ENCODE measurements at regions of chr5 and their contacts with region 1.

Region 1: GRCh38 chr5:157820593-157821252 is 38.2 kb downstream of the CLINT1 start:
- DNase-seq: peak; percentile 64
- ATAC-seq: peak; percentile 43; the same call in 2 of the 3 replicates
- H3K4me3 ChIP-seq: no peak overlapping the region
- H3K27ac ChIP-seq: no peak overlapping the region
- H3K4me1 ChIP-seq: peaks cover 37% of the 10 kb centered on the region
- H3K27me3 ChIP-seq: no peaks in the 10 kb centered on the region
- CTCF ChIP-seq: peak; percentile 49
- EP300 ChIP-seq: no peak
- POLR2A ChIP-seq: no peak
- RAD21 ChIP-seq: no peak

Region 2: GRCh38 chr5:157917899-157918809 is 97.4 kb after region 1 on chr5:
- CTCF ChIA-PET with region 1: interaction called, 14 read pairs
- POLR2A ChIA-PET with region 1: no interaction called
- in situ Hi-C with region 1: loop called (anchors 10 kb)
- intact Hi-C with region 1: loop called (anchors 1 kb)
- DNase-seq: peak; percentile 58
- ATAC-seq: peak; percentile 92
- H3K4me3 ChIP-seq: no peak overlapping the region
- H3K27ac ChIP-seq: no peak overlapping the region
- H3K4me1 ChIP-seq: peaks cover 14% of the 10 kb centered on the region; the same call in 1 of the 2 replicates
- H3K27me3 ChIP-seq: no peaks in the 10 kb centered on the region; a peak in 1 of 5 replicates
- CTCF ChIP-seq: peak; percentile 66
- EP300 ChIP-seq: no peak
- POLR2A ChIP-seq: no peak
- RAD21 ChIP-seq: peak; percentile 58

Region 3: DNA sequence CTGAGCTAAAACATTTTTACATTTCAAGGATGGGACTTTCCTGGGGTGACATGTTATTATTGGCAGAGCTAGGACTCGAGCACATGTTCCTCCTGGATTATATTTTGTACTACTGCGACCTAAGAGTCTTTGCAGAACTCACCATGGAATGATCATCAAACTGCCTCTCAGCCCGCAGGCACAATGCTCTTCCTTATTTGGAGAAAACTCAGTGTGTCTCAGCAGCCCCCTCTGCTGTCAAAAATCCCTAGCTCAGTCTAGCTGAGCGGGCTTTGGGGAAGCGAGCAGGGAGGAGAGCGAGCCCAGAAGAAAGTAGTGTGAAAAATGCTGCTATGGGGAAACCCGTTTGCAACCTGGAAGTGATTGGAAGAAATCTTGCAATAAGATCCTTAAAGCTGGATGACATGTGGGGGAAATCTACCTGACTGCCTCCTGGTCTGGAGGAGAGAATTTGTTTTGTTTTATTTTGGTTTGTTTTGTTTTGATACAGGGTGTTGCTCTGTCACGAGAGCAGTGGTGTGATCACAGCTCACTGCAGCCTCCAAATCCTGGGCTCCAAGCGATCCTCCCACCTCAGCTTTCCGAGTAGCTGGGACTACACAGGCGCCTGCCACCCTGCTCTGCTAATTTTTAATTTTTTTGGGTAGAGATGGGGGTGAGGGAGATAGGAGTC is 128.2 kb after region 1 on chr5:
- CTCF ChIA-PET with region 1: interaction called, 21 read pairs
- POLR2A ChIA-PET with region 1: no interaction called
- in situ Hi-C with region 1: no loop called
- intact Hi-C with region 1: loop called (anchors 1 kb)
- DNase-seq: peak; percentile 92
- ATAC-seq: peak; percentile 100
- H3K4me3 ChIP-seq: no peak overlapping the region
- H3K27ac ChIP-seq: no peak overlapping the region
- H3K4me1 ChIP-seq: peaks cover 9% of the 10 kb centered on the region; the same call in 1 of the 2 replicates
- H3K27me3 ChIP-seq: no peaks in the 10 kb centered on the region; a peak in 1 of 5 replicates
- CTCF ChIP-seq: peak; percentile 90
- EP300 ChIP-seq: no peak
- POLR2A ChIP-seq: no peak
- RAD21 ChIP-seq: no peak; the same call in 1 of the 2 replicates

Region 4: DNA sequence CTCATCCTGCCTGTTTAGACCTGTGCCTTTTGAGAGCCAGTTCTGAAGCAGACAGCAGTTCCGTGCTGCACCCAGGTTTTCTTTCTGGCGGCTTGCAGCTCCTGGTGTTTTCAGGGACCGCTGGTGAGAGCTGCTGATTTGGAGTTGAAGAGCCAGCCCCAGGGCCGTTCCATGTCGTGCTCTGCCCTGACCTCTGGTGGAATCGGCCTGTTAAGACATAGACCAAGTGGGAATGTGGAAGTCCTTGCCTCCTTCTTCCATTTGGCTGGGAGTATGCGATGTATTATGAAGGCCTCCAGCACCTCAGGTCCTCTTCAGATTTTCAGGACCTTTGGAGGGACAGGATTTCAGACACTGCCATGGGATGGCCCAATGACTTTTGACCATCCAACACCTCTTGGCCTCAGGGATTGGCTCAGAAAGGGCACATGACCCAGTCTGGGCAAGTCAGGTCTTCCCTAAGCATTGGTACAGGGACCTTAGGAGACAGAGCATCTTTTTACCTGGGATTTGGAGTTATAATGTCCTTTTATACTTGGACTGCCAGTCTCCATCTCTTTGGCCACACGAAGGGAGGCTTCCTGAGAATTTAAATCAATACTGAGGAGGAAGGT is 174.3 kb after region 1 on chr5:
- CTCF ChIA-PET with region 1: interaction called, 15 read pairs
- POLR2A ChIA-PET with region 1: no interaction called
- in situ Hi-C with region 1: no loop called
- intact Hi-C with region 1: loop called (anchors 1 kb)
- DNase-seq: peak; percentile 41
- ATAC-seq: peak; percentile 100
- H3K4me3 ChIP-seq: peak overlapping the region in 1 of 3 experiments; percentile 23; a peak in 1 of 6 replicates
- H3K27ac ChIP-seq: no peak overlapping the region
- H3K4me1 ChIP-seq: peaks cover 6% of the 10 kb centered on the region; the same call in 1 of the 2 replicates
- H3K27me3 ChIP-seq: 0 out of 5 replicates have a peak, but pooled peaks cover 0 to 6% of the 10 kb centered on the region in 2 experiments
- CTCF ChIP-seq: peak; percentile 87
- EP300 ChIP-seq: no peak
- POLR2A ChIP-seq: no peak
- RAD21 ChIP-seq: peak; percentile 60; the same call in 1 of the 2 replicates

Measured in HepG2 (cell line).